Dorsolateral prefrontal cortex (tissue), 120 donors: ENCODE measurements at regions of chr11 and their contacts with region 1.

Region 1: GRCh38 chr11:113773416-113774173 is at the start of gene ZW10:
- DNase-seq: peak; percentile 90 to 97 (median 96)
- H3K4me3 ChIP-seq: peak within 1 kb of the TSS; percentile 39 to 97 (median 86)
- H3K27ac ChIP-seq: peak within 1 kb of the TSS; percentile 2 to 95 (median 81)
- H3K27me3 ChIP-seq: no peaks in the 10 kb centered on the region
- CTCF ChIP-seq: peak; percentile 73 to 99 (median 87)
- total RNA-seq, gene ZW10: 8.4 to 21.0 (median 13.8) TPM

Region 2: DNA sequence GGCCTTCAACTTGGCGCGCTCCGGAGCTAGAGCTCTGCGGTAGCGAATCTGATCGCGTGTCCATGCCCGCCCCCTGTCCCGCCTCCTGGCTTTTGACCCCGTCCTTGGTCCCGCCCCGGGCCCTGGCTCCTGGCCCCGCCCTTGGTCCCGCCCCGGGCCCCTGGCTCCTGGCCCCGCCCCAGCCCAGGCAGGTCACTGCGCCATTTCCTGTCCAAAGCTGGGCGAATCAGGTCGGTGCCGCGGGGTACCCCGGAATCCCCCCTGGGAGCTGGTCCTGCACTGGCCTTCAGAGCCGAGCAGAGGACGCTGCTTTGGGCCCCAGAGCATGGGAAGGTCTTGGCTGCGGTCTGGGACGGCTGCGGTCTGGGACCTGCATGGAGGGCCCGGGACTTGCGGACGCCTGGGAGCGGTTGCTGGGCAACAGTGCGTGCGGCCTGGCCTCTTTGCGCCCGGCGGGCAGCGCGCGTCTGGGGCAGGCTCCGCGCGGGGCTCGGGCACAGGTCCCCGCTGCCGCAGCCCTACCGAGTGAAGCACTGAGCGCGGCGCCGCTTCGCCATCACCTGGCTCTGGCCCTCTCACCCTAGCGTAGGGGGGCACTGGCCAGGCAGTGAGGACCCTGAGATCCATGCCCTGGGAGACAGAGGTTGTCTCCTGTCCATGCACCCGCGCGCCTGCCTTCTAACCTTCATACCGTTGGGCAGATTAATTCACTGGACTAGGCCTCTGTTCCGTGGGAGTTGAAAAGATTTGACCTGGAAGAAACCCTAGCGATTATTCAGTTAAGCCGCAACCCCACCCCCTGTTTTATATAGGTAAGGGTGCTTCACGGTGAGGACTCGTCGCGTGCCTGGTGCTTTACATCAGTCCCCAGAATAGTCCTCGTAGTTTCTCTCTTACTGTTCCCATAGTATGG is 458.9 kb before region 1 on chr11 and contains the start of gene TTC12:
- intact Hi-C with region 1: loop called in 1 of 2 experiments (anchors 5 kb)
- DNase-seq: peak; percentile 88 to 95 (median 92)
- H3K4me3 ChIP-seq: peak within 1 kb of the TSS; percentile 40 to 92 (median 76)
- H3K27ac ChIP-seq: peak within 1 kb of the TSS in 56 of 59 donors; percentile 20 to 92 (median 81)
- H3K27me3 ChIP-seq: no peaks in the 10 kb centered on the region
- CTCF ChIP-seq: peak in 28 of 56 donors; percentile 5 to 61 (median 30)
- total RNA-seq, gene TTC12: 4.3 to 31.8 (median 14.8) TPM

Region 3: DNA sequence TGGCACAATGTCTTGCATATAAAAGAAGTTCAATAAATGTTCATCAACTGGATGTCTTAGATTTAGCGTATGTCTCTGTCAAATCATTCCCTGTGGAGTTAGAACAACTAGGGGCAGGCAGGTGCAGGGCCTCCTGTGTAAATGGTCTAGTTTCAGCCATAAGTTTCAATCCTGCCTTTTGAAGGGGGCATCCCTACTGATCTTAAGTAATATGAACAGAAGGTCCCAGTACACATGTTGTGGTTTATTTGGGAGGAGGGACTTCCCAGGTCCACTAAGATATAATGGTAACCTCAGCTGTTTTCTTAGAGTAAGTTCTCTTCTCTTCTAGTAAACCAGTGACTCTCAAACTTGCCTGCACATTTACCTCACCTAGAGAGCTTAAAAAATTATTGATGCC is 439.4 kb before region 1 on chr11:
- intact Hi-C with region 1: no loop called
- DNase-seq: no peak
- H3K4me3 ChIP-seq: no peak overlapping the region
- H3K27ac ChIP-seq: no peak overlapping the region
- H3K27me3 ChIP-seq: no peaks in the 10 kb centered on the region
- CTCF ChIP-seq: no peak

Region 4: DNA sequence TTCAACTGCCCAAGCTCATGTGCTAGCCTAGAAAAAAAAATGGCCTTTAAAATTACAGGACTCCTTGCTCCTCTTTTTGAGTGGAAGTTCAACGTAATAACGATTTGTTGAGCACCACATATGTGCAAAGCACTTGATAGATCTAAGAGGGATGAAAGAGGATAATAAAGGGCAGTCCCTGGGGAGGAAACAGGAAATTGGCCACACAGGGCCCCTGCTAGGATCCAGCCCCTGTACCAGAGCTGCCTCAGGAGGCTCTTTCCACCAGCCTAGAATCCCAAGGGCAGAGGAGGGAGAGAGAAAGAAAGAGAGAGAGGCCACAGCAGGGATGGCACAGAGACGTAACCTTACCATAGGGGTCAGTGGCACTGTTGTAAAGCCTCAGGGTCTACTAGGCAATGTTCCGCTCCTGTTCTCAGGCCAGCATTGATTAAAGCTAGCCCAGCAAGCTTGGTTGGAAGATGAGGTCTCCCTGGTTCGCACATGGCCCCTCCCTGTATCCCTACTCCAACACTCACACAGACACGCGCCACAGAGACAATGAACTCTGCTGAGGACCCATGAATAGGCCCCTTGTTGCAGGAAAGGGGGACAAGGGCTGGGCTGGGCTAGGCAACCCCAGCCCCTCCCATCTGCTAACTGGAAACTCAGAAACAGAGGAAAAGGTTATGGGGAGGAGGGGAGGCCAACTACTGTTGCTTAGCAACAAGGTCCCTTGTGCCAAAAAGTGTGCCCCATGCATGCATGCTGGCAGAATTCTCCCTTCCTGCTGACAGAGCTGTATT is 67.5 kb before region 1 on chr11 and contains the start of gene TMPRSS5:
- intact Hi-C with region 1: loop called in 1 of 2 experiments (anchors 10 kb)
- DNase-seq: peak; percentile 30 to 93 (median 87)
- H3K4me3 ChIP-seq: peak within 1 kb of the TSS in 48 of 59 donors; percentile 5 to 65 (median 32)
- H3K27ac ChIP-seq: peak within 1 kb of the TSS in 57 of 59 donors; percentile 7 to 94 (median 78)
- H3K27me3 ChIP-seq: no peaks in the 10 kb centered on the region
- CTCF ChIP-seq: peak in 7 of 56 donors; percentile 6 to 38 (median 11)
- total RNA-seq, gene TMPRSS5: 5.8 to 117 (median 15.1) TPM

Region 5: GRCh38 chr11:113839842-113840241 is 66.2 kb after region 1 on chr11:
- intact Hi-C with region 1: no loop called
- DNase-seq: no peak
- H3K4me3 ChIP-seq: no peak overlapping the region
- H3K27ac ChIP-seq: peak overlapping the region in 3 of 59 donors; percentile 15 to 24 (median 17)
- H3K27me3 ChIP-seq: no peaks in the 10 kb centered on the region
- CTCF ChIP-seq: no peak

Region 6: DNA sequence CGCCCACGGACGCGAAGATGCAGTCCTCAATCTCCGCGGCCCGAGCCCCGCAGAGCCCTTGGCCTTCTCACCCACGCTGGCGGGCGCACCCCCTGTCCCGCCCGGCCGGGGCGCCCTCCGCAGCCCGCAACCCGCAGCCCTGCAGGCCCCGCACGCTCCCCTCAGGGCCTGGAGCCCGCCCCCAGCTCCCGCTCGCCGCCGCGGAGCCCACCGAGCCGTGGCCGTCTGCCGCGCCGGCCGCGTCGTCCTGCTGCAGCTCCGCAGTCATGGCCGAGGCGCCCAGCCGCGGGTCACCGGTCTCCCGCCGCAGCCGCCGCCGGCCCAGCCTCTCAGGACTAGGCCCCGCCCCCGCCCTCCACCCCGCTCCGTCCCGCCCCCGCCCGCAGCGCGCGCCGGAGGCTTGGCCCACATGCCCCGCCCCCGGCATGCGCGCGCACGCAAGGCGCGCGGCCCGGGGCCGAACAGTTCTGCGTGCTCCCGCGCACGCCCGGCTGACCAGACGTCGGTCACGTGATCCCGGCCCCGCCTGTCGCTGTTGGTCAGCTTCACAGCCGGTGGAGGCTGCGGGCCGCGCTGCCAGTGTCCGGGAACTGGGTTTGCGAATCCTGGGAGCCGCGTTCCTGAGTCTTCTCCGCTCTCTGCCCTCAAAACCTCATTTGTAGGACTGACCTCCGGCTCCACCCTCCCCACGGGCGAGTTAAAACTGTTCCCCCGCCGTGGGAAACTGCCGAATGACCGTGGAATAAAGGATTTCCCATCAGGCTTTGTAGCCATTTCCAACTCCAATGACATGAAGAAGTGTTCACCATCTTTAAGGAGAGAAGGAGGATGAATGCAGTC is 101.9 kb after region 1 on chr11 and contains the start of gene USP28:
- intact Hi-C with region 1: loop called (anchors 10 kb)
- DNase-seq: peak; percentile 96 to 99 (median 98)
- H3K4me3 ChIP-seq: peak within 1 kb of the TSS; percentile 43 to 97 (median 84)
- H3K27ac ChIP-seq: peak within 1 kb of the TSS; percentile 86 to 100 (median 96)
- H3K27me3 ChIP-seq: no peaks in the 10 kb centered on the region
- CTCF ChIP-seq: peak in 22 of 56 donors; percentile 3 to 44 (median 16)
- total RNA-seq, gene USP28: 20.2 to 57.1 (median 38.9) TPM

Region 7: DNA sequence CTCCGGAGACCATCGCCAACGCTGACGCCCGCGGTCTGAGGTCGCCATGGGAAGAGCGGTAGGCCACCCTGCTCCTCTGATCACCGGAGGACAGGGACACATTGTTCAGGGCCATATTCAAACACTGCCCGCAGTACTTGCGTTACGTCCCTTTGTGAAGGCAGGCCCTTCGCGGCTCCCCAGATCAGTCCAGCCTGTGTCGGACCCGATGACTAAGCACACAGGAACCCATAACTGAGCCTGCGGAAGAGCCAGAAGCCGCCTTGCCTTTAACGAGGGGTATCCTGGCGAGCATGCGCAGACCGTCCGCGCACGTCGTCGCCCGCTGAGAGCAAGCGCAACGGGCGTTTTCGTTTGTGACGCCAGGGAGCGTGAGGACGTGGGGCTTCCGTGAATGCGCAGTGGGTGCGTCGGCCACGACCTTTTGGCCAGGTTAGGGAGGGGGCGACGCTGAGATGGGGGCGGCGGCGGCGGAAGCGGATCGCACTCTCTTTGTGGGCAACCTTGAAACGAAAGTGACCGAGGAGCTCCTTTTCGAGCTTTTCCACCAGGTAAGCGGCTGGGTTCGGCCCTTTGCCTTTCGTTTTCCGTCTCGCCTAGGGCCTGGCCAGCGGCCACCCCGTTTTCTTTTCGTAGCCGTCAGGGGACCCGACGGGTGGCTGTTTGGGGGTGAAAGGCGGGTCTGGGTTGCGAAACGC is 626.8 kb after region 1 on chr11 and contains the starts of genes C11orf71 and RBM7:
- intact Hi-C with region 1: loop called in 1 of 2 experiments (anchors 10 kb)
- DNase-seq: peak; percentile 92 to 96 (median 94)
- H3K4me3 ChIP-seq: peak within 1 kb of the TSS; percentile 63 to 99 (median 89)
- H3K27ac ChIP-seq: peak within 1 kb of the TSS; percentile 78 to 99 (median 96)
- H3K27me3 ChIP-seq: no peaks in the 10 kb centered on the region
- CTCF ChIP-seq: peak in 32 of 56 donors; percentile 3 to 52 (median 22)
- total RNA-seq, gene C11orf71: 6.3 to 33.8 (median 12.8) TPM
- total RNA-seq, gene RBM7: 8.3 to 29.9 (median 17.0) TPM